Ascending aorta (tissue), 2 donors: ENCODE measurements at regions of chr11 and their contacts with region 1.

Region 1: DNA sequence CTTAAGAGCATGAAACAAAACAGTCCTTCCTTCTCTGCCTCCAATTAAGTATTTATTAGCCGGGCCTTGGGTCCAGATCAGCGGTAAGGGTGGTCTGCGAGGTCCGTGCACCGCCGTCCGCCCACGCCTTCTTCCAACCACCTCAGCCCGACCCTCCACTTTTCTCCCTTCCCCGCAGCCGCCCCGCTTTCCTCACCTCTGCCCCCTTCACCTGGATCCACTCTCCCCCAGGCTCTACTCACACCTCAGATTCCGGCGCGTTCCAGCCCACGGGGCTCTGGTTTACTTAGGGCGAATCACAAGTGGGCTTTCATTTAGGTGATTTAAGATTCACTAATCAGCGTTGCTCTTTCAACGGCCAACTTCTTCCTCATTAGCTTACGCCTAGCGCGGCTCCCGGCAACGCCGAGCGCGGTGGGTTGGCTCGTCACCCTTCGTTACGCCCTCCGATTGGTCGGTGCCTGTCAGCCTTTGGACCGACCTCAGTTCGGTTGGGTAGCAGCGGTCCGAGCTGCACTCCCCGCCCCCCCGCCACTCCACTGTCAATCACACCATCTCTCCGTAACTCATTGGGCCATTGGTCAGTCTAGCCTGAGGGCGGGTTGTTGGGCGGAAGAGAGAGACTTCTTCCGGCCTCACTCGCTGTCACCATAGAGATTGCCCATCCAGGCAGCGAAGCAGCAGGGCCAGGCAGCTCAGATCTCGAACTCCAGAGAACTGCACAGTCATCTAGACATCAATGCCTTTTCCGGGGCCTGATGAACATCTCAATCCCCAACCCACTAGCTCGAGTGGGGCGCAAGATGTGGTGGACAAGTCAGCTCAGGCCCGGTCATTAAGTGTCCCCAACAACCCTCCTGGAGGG is at the start of gene TMEM218:
- DNase-seq: peak; percentile 98 to 99
- H3K4me3 ChIP-seq: peak within 1 kb of the TSS; percentile 71 to 76
- H3K27ac ChIP-seq: peak within 1 kb of the TSS; percentile 69
- H3K4me1 ChIP-seq: peaks cover 0 to 4% of the 10 kb centered on the region in 2 donors
- H3K27me3 ChIP-seq: no peaks in the 10 kb centered on the region
- CTCF ChIP-seq: no peak
- total RNA-seq, gene TMEM218: 0.64 TPM

Region 2: GRCh38 chr11:124622531-124623451 is 488.8 kb before region 1 on chr11 and contains the start of gene TBRG1:
- intact Hi-C with region 1: loop called (anchors 5 kb)
- DNase-seq: peak; percentile 41 to 95
- H3K4me3 ChIP-seq: peak within 1 kb of the TSS; percentile 82 to 94
- H3K27ac ChIP-seq: peak within 1 kb of the TSS; percentile 92 to 98
- H3K4me1 ChIP-seq: peaks cover 0 to 3% of the 10 kb centered on the region in 2 donors
- H3K27me3 ChIP-seq: no peaks in the 10 kb centered on the region
- CTCF ChIP-seq: no peak
- total RNA-seq, gene TBRG1: 21.2 TPM

Region 3: GRCh38 chr11:124953753-124954589 is 157.6 kb before region 1 on chr11 and contains the start of gene CCDC15:
- intact Hi-C with region 1: loop called (anchors 1 kb)
- DNase-seq: peak; percentile 88 to 98
- H3K4me3 ChIP-seq: peak within 1 kb of the TSS; percentile 62 to 71
- H3K27ac ChIP-seq: peak within 1 kb of the TSS; percentile 68 to 78
- H3K4me1 ChIP-seq: peaks cover 0 to 8% of the 10 kb centered on the region in 2 donors
- H3K27me3 ChIP-seq: no peaks in the 10 kb centered on the region
- CTCF ChIP-seq: no peak
- total RNA-seq, gene CCDC15: not detected

Region 4: GRCh38 chr11:125345421-125346178 is 234.0 kb after region 1 on chr11:
- intact Hi-C with region 1: loop called (anchors 5 kb)
- DNase-seq: peak; percentile 46 to 90
- H3K4me3 ChIP-seq: peak overlapping the region in 1 of 2 donors; percentile 16
- H3K27ac ChIP-seq: peak overlapping the region; percentile 61 to 83
- H3K4me1 ChIP-seq: peaks cover 0 to 11% of the 10 kb centered on the region in 2 donors
- H3K27me3 ChIP-seq: no peaks in the 10 kb centered on the region
- CTCF ChIP-seq: peak; percentile 85 to 92 (median 88)

Region 5: DNA sequence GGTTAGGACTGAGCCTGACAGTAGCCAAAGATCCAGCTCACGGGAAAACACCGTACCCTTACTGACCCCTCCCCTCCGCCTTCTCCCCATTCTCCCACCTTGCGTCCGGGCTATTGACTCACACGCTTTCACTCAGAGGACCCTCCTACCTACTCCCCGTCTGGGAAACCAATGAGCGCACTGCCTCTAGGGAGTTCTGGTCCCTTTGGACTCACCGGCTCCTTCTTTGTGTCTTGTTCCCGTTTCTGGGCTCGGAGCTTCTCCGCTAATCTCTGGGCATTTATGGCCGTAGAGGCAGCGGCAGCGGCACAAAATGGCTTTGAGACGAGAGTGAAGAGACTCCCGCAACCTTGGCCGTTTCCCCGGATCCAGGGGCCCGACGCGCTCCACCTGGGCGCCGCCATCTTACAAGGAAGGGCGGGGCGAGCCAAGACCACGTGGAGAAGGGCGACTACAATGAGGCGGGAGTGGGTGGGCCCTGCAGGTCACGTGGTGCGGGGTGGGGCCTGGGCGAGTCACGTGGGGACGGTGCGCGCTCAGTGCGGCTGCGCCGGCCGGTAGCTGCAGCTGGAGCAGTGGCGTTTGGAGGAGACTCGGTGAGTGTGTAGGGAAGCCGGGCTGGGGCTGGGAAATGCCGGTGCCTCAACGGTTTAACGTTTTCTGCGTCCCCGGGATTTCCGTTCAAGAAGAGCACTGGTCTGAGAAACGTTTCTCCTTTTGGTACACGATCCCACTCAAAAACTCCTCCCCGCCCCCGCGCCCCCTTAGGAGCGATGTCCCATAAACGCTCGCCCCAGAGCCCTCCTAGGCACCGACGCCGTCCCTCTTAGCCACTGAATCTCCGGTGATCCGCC is 1099.9 kb after region 1 on chr11 and contains the starts of genes FAM118B and RPUSD4:
- intact Hi-C with region 1: loop called (anchors 5 kb)
- DNase-seq: peak; percentile 90 to 99
- H3K4me3 ChIP-seq: peak within 1 kb of the TSS; percentile 78 to 89
- H3K27ac ChIP-seq: peak within 1 kb of the TSS; percentile 6 to 42
- H3K4me1 ChIP-seq: peaks cover 0 to 5% of the 10 kb centered on the region in 2 donors
- H3K27me3 ChIP-seq: no peaks in the 10 kb centered on the region
- CTCF ChIP-seq: no peak
- total RNA-seq, gene FAM118B: 14.0 TPM
- total RNA-seq, gene RPUSD4: 7.3 TPM